GM10248 (cell line): ENCODE measurements at regions of chr10 and their contacts with region 1.

Region 1: GRCh38 chr10:96374985-96375830 is 16.4 kb upstream of the OPALIN start:
- DNase-seq: peak; percentile 93
- CTCF ChIP-seq: peak; percentile 99

Region 2: DNA sequence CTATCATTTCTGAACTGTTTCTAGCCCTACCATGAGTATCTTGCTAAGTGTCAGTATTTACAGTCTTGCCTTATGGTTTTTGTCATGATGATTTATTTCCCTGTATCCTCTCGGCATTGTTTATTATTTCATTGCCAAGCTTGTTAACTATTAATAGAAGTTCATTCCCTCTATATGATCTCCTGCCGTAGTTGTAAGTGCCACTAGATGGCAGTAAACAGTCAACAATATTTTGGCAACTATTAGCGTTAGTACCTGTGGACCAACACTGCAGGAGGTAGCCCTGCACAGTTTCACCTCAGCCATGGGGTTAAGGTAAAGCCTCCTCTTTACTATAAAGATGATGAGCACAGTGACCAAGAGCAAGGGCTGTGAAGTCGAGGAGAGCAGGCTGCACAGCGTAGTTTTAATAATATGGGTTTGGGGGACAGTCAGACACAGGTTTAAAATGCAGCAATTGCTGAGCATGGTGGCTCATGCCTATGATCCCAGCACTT is 358.0 kb before region 1 on chr10:
- CTCF ChIA-PET with region 1: interaction called, 10 read pairs
- POLR2A ChIA-PET with region 1: no interaction called
- DNase-seq: peak; percentile 67
- CTCF ChIP-seq: peak; percentile 78

Region 3: DNA sequence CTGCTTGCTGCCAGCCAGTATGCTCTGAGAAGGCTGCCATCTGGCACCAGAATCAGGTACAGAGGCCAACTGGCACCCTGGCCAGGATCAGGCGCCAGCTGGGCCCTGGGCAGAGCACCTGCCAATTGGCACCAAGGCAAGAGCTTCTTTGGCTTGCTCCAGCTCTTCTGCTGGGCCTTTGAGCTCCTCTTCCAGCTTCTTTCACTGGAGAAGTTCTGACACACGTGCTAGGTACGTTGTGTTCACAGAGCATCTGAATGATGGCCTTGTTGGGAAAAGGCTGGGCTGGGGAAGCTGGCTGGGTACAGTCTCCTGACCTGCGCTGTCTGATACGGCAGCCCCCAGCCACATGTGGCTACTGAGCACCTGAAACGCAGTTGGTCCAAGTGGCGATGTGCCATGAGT is 15.3 kb after region 1 on chr10:
- CTCF ChIA-PET with region 1: interaction called, 19 read pairs
- POLR2A ChIA-PET with region 1: no interaction called
- DNase-seq: no peak
- CTCF ChIP-seq: no peak

Region 4: GRCh38 chr10:96395931-96396877 is 21.0 kb after region 1 on chr10:
- CTCF ChIA-PET with region 1: interaction called, 19 read pairs
- POLR2A ChIA-PET with region 1: no interaction called
- DNase-seq: peak; percentile 86
- CTCF ChIP-seq: peak; percentile 83

Region 5: GRCh38 chr10:96496281-96496925 is 121.2 kb after region 1 on chr10:
- CTCF ChIA-PET with region 1: interaction called, 10 read pairs
- POLR2A ChIA-PET with region 1: no interaction called
- DNase-seq: no peak
- CTCF ChIP-seq: no peak

Region 6: GRCh38 chr10:96513698-96514561 is 138.7 kb after region 1 on chr10 and contains the start of gene TLL2:
- CTCF ChIA-PET with region 1: interaction called, 21 read pairs
- POLR2A ChIA-PET with region 1: no interaction called
- DNase-seq: peak; percentile 89
- CTCF ChIP-seq: peak; percentile 53

Region 7: DNA sequence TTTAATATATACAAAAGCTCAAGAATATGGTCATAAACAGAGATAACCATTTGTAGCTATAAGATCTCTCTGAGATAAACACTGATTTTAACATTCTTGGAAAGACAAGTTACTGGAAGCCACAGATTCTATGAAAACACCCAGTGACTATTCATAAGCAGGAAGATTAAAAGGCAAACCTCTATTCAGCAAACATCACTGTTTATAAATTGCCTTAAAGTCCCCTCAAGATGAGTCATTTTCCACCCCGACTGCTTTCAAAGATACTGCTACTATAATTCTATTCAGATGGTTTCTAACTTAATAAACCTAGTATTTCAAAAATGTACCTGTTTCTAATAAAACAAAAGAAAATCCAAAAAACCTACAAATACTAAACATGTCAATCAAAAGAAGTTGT is 190.6 kb after region 1 on chr10:
- CTCF ChIA-PET with region 1: no interaction called
- POLR2A ChIA-PET with region 1: no interaction called
- DNase-seq: peak; percentile 29
- CTCF ChIP-seq: no peak

Region 8: DNA sequence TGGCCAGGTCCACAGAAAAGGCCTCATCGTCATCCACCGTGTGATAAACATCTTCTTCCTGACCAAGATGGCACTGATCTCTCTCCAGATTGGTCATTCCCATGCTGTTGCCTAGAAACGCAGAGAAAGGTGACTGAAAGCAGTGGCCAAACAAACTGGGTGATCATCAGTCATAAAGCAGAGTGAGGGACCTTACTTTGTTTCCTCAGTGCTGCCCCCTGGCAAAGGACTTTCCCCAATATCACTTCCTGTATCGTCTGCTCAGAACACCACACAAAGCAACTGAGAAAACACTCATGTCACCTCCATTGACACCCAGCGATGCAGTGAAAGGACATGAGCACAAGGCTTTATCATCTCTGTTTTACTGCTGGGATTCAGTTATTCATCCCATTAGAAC is 251.6 kb after region 1 on chr10:
- CTCF ChIA-PET with region 1: no interaction called
- POLR2A ChIA-PET with region 1: no interaction called
- DNase-seq: no peak
- CTCF ChIP-seq: no peak